B cell (primary cell): ENCODE measurements at regions of chr3 and their contacts with region 1.

Region 1: GRCh38 chr3:69051756-69052471 is at the start of gene TMF1:
- DNase-seq: peak; percentile 99
- ATAC-seq: peak; percentile 88
- H3K4me3 ChIP-seq: peak within 1 kb of the TSS; percentile 86 to 96 (median 90)
- H3K4me3 Mint-ChIP-seq: peak within 1 kb of the TSS; percentile 94
- H3K27ac ChIP-seq: peak within 1 kb of the TSS; percentile 92
- H3K27ac Mint-ChIP-seq: peak within 1 kb of the TSS; percentile 96
- H3K4me1 ChIP-seq: peaks cover 13 to 29% of the 10 kb centered on the region in 2 donors
- H3K4me1 Mint-ChIP-seq: peaks cover 46% of the 10 kb centered on the region
- H3K27me3 ChIP-seq: no peaks in the 10 kb centered on the region
- H3K27me3 Mint-ChIP-seq: no peaks in the 10 kb centered on the region
- CTCF ChIP-seq: no peak
- total RNA-seq, gene TMF1: 65.1 and 69.3 TPM in 2 replicates

Region 2: GRCh38 chr3:68931406-68932149 is 120.3 kb before region 1 on chr3:
- CTCF ChIA-PET with region 1: no interaction called
- POLR2A ChIA-PET with region 1: no interaction called
- intact Hi-C with region 1: no loop called
- DNase-seq: peak; percentile 7
- ATAC-seq: no peak
- H3K4me3 ChIP-seq: no peak overlapping the region
- H3K4me3 Mint-ChIP-seq: no peak overlapping the region
- H3K27ac ChIP-seq: no peak overlapping the region
- H3K27ac Mint-ChIP-seq: no peak overlapping the region
- H3K4me1 ChIP-seq: peaks cover 6 to 7% of the 10 kb centered on the region in 2 donors
- H3K4me1 Mint-ChIP-seq: peaks cover 4% of the 10 kb centered on the region
- H3K27me3 ChIP-seq: peaks cover 0 to 51% (median 38%) of the 10 kb centered on the region in 4 experiments
- H3K27me3 Mint-ChIP-seq: peaks cover 71% of the 10 kb centered on the region
- CTCF ChIP-seq: no peak

Region 3: GRCh38 chr3:69013253-69014021 is 38.5 kb before region 1 on chr3 and contains the start of gene EOGT:
- CTCF ChIA-PET with region 1: interaction called, 6 read pairs
- POLR2A ChIA-PET with region 1: no interaction called
- intact Hi-C with region 1: loop called (anchors 2 kb)
- DNase-seq: peak; percentile 81
- ATAC-seq: peak; percentile 88
- H3K4me3 ChIP-seq: peak within 1 kb of the TSS; percentile 39 to 79 (median 72)
- H3K4me3 Mint-ChIP-seq: peak within 1 kb of the TSS; percentile 92
- H3K27ac ChIP-seq: peak within 1 kb of the TSS in 1 of 2 donors; percentile 47
- H3K27ac Mint-ChIP-seq: peak within 1 kb of the TSS; percentile 67
- H3K4me1 ChIP-seq: peaks cover 6 to 11% of the 10 kb centered on the region in 2 donors
- H3K4me1 Mint-ChIP-seq: peaks cover 10% of the 10 kb centered on the region
- H3K27me3 ChIP-seq: no peaks in the 10 kb centered on the region
- H3K27me3 Mint-ChIP-seq: no peaks in the 10 kb centered on the region
- CTCF ChIP-seq: peak; percentile 49
- total RNA-seq, gene EOGT: 11.3 and 15.5 TPM in 2 replicates

Region 4: DNA sequence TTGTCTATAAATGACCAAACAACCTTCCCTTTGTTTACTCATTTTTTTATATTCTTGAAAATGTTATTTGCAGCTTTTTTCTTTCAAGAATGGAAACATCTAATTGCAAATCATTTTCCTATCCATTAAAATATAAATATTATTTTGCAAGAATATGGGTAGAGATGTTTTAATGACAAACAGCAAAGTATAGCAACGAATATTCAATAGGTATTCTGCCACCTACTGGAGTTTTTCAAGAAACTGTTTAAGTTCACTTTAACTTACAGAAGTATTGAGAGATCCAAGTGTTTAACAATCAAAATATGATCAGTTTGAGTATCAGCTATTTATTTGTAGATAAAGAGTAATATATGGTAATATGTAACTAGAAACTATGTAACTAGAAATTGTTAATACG is 31.5 kb before region 1 on chr3:
- CTCF ChIA-PET with region 1: no interaction called
- POLR2A ChIA-PET with region 1: interaction called, 12 read pairs
- intact Hi-C with region 1: no loop called
- DNase-seq: no peak
- ATAC-seq: no peak
- H3K4me3 ChIP-seq: no peak overlapping the region
- H3K4me3 Mint-ChIP-seq: no peak overlapping the region
- H3K27ac ChIP-seq: no peak overlapping the region
- H3K27ac Mint-ChIP-seq: no peak overlapping the region
- H3K4me1 ChIP-seq: no peaks in the 10 kb centered on the region
- H3K4me1 Mint-ChIP-seq: no peaks in the 10 kb centered on the region
- H3K27me3 ChIP-seq: no peaks in the 10 kb centered on the region
- H3K27me3 Mint-ChIP-seq: no peaks in the 10 kb centered on the region
- CTCF ChIP-seq: no peak

Region 5: DNA sequence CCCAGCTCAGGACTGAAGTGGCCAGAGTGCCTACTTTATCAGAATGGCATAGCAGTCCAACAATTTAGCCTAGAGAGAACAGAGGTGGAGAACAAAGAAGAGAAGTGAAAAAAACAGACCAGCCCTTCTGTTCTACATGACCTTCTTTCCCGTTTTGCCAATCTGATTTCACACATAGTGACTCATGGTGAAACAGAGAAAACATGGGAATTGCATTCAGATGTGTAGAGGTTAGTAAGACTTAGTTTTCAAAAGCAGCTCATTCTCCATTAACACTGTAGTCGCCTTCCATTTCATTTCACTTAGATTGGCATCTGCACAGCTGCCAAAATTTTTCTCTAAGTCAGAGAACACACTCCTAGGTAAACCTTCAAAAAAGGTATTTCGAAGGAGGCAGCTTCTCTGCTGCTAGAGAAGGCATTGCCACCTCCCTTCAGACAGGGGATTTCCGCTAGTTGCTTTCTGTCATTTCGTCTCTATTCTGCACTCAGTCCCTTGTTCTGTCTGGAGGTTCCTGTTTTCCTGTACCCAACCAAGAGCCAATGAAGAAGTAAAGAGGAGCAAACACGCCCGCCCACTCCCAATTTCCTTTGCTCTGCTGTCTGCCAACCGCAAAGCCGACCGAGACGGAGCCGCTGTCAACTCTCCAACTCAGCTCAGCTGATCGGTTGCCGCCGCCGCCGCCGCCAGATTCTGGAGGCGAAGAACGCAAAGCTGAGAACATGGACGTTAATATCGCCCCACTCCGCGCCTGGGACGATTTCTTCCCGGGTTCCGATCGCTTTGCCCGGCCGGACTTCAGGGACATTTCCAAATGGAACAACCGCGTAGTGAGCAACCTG is 32.6 kb after region 1 on chr3 and contains the start of gene ARL6IP5:
- CTCF ChIA-PET with region 1: interaction called, 20 read pairs
- POLR2A ChIA-PET with region 1: interaction called, 9 read pairs
- intact Hi-C with region 1: loop called (anchors 1 kb)
- DNase-seq: peak; percentile 96
- ATAC-seq: peak; percentile 75
- H3K4me3 ChIP-seq: peak within 1 kb of the TSS; percentile 82 to 96 (median 92)
- H3K4me3 Mint-ChIP-seq: peak within 1 kb of the TSS; percentile 95
- H3K27ac ChIP-seq: peak within 1 kb of the TSS; percentile 87 to 95
- H3K27ac Mint-ChIP-seq: peak within 1 kb of the TSS; percentile 97
- H3K4me1 ChIP-seq: peaks cover 66 to 72% of the 10 kb centered on the region in 2 donors
- H3K4me1 Mint-ChIP-seq: peaks cover 72% of the 10 kb centered on the region
- H3K27me3 ChIP-seq: no peaks in the 10 kb centered on the region
- H3K27me3 Mint-ChIP-seq: no peaks in the 10 kb centered on the region
- CTCF ChIP-seq: no peak
- total RNA-seq, gene ARL6IP5: 89.1 and 89.5 TPM in 2 replicates

Region 6: GRCh38 chr3:69092030-69092516 is 40.2 kb after region 1 on chr3:
- CTCF ChIA-PET with region 1: interaction called, 20 read pairs
- POLR2A ChIA-PET with region 1: interaction called, 7 read pairs
- intact Hi-C with region 1: no loop called
- DNase-seq: peak; percentile 72
- ATAC-seq: peak; percentile 68
- H3K4me3 ChIP-seq: peak overlapping the region; percentile 26 to 46 (median 36)
- H3K4me3 Mint-ChIP-seq: peak overlapping the region; percentile 70
- H3K27ac ChIP-seq: peak overlapping the region; percentile 71 to 94
- H3K27ac Mint-ChIP-seq: peak overlapping the region; percentile 85
- H3K4me1 ChIP-seq: peaks cover 87 to 89% of the 10 kb centered on the region in 2 donors
- H3K4me1 Mint-ChIP-seq: peaks cover 85% of the 10 kb centered on the region
- H3K27me3 ChIP-seq: no peaks in the 10 kb centered on the region
- H3K27me3 Mint-ChIP-seq: no peaks in the 10 kb centered on the region
- CTCF ChIP-seq: no peak